ENCODE measurements at regions of chr2 and their contacts with region 1.

Region 1: GRCh38 chr2:38750891-38751595 is at the start of gene SRSF7:
- DNase-seq: peak; percentile 98
- H3K4me3 Mint-ChIP-seq: peak within 1 kb of the TSS; percentile 90
- H3K27ac Mint-ChIP-seq: peak within 1 kb of the TSS; percentile 97
- H3K4me1 Mint-ChIP-seq: peaks cover 30% of the 10 kb centered on the region
- H3K27me3 Mint-ChIP-seq: no peaks in the 10 kb centered on the region
- CTCF ChIP-seq: no peak
- total RNA-seq, gene SRSF7: 196 and 275 TPM in 2 replicates

Region 2: GRCh38 chr2:38572167-38572566 is 178.9 kb before region 1 on chr2:
- CTCF ChIA-PET with region 1: no interaction called
- POLR2A ChIA-PET with region 1: interaction called, 14 read pairs
- intact Hi-C with region 1: no loop called
- DNase-seq: peak; percentile 73
- H3K4me3 Mint-ChIP-seq: no peak overlapping the region
- H3K27ac Mint-ChIP-seq: no peak overlapping the region
- H3K4me1 Mint-ChIP-seq: peaks cover 10% of the 10 kb centered on the region
- H3K27me3 Mint-ChIP-seq: no peaks in the 10 kb centered on the region
- CTCF ChIP-seq: no peak

Region 3: DNA sequence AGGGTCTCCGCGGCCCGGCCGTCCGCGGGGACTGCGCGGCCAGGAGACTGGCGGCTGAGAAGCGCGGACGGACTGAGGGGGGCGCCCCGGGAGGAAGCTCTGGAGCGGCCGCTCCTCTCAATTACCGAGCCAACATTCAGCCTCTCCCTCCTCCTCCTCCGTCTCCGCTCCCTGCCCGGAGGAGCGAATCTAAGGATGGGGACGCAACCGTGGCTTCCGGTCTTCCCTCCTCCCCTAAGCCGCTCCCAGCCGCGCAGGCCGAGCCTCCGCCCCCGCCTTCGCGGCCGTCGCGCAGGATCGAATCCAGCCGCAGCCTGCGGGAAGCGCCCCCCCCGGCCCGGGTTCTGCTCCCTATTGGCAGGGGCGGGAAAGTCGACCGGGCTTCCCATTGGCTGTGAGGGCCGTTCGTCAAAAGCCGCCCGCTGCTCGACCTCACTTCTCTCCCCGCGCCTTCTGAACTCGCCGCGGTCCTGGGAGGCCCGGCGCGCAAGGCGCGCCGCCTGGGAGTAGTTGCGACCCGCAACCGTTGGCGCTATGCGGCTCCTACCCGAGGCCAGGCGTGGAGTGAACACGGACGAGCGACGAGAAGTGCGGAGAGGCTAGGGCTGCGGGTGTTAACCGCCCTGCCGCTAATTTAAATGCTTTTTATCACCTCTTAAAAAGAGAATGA is 148.2 kb before region 1 on chr2 and contains the start of gene HNRNPLL:
- CTCF ChIA-PET with region 1: no interaction called
- POLR2A ChIA-PET with region 1: interaction called, 88 read pairs
- intact Hi-C with region 1: no loop called
- DNase-seq: peak; percentile 98
- H3K4me3 Mint-ChIP-seq: peak within 1 kb of the TSS; percentile 82
- H3K27ac Mint-ChIP-seq: peak within 1 kb of the TSS; percentile 94
- H3K4me1 Mint-ChIP-seq: peaks cover 18% of the 10 kb centered on the region
- H3K27me3 Mint-ChIP-seq: no peaks in the 10 kb centered on the region
- CTCF ChIP-seq: no peak
- total RNA-seq, gene HNRNPLL: 43.4 and 57.7 TPM in 2 replicates

Region 4: DNA sequence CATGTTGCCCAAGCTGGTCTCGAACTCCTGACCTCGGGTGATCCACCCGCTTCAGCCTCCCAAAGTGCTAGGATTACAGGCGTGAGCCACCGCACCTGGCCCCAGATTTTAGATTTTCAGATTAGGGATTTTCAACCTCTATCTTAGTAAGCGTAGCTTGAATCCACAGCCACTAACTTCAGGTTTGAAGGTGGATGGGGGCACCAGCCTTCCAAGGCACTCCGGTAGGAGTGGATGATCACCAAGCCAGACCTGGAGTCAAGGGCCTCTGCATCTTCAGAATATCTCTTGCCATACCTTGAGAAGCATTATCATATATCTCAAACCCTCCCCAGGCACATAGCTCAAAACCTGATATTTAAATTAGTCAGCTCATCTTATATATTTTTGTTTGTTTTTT is 67.3 kb before region 1 on chr2:
- CTCF ChIA-PET with region 1: no interaction called
- POLR2A ChIA-PET with region 1: no interaction called
- intact Hi-C with region 1: no loop called
- DNase-seq: no peak
- H3K4me3 Mint-ChIP-seq: no peak overlapping the region
- H3K27ac Mint-ChIP-seq: no peak overlapping the region
- H3K4me1 Mint-ChIP-seq: peaks cover 4% of the 10 kb centered on the region
- H3K27me3 Mint-ChIP-seq: no peaks in the 10 kb centered on the region
- CTCF ChIP-seq: no peak

Region 5: DNA sequence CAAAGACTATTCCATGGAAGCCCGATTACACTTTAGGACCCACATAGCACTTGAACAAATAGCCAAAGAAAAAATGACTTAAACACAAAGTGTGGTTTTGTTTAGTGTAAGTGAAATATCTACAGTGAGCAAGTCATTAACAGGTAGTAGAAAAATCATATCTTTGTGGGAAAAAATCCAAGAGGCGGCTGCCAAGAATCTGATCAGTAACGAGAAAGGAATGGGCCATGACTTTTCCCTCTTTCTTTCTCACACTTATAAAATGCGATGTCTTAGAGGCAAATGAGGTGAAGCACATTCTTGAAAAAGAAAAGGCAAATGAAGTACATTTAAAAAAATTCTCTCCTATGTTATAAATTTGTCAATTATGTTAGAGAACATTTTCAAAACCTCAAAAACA is 14.1 kb after region 1 on chr2:
- CTCF ChIA-PET with region 1: no interaction called
- POLR2A ChIA-PET with region 1: interaction called, 20 read pairs
- intact Hi-C with region 1: no loop called
- DNase-seq: no peak
- H3K4me3 Mint-ChIP-seq: no peak overlapping the region
- H3K27ac Mint-ChIP-seq: no peak overlapping the region
- H3K4me1 Mint-ChIP-seq: no peaks in the 10 kb centered on the region
- H3K27me3 Mint-ChIP-seq: no peaks in the 10 kb centered on the region
- CTCF ChIP-seq: no peak

Region 6: DNA sequence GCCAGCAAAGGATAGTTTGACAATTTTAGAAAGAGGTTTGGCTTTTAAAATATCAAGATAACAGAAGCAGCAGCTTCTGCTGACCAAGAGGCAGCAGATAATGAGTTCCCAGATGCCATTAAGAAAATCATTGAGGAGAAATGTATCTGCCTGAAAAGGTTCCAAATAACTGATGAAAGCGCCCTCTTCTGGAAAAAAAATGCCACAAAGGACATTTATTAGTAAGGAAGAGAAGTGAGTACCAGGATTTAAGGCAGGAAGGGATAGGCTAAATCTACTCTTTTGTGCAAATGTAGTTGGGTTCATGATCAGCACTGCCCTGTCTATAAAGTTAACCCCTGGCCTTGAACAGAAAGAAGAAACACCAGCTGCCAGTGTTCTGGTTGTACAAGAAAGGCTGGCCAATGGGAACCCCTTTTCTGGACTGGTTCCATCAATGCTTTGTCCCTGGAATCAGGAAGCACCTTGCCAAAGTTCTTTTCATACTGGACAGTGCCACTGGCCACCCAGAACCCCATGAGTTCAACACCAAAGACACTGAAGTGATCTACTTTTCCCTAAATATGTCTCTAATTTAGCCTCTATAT is 84.1 kb after region 1 on chr2:
- CTCF ChIA-PET with region 1: no interaction called
- POLR2A ChIA-PET with region 1: interaction called, 7 read pairs
- intact Hi-C with region 1: loop called (anchors 5 kb)
- DNase-seq: peak; percentile 47
- H3K4me3 Mint-ChIP-seq: no peak overlapping the region
- H3K27ac Mint-ChIP-seq: no peak overlapping the region
- H3K4me1 Mint-ChIP-seq: no peaks in the 10 kb centered on the region
- H3K27me3 Mint-ChIP-seq: no peaks in the 10 kb centered on the region
- CTCF ChIP-seq: peak; percentile 44

Measured in MCF 10A (cell line).